Mammary epithelial cell (primary cell): ENCODE measurements at regions of chr10 and their contacts with region 1.

Region 1: DNA sequence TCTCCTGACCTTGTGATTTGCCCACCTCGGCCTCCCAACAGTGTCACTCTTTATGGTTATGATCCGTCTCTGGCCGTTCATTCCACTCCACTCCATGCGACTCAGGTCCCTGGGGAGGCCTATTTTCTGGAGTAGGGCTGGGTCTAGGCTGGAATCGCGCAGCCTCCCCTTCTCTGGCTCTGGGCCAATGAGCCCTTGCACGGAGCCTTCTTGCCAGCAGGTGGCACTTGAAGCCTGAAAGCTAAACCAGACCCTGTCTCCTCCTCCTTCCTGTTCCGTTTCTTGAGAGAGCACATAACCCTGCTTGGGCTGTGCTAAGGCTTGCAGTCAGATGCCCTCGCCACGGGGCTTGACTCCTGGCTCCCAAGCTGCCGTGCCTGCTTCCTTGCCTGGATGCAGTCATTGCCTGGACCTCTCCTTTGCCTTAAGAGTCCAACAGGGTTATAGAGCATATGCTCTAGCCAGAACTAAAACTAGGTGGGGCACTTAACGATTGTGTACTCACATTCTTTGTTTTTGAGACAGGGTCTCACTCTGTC is 9.6 kb upstream of the DNAJB12 start:
- DNase-seq: peak; percentile 92
- H3K4me3 ChIP-seq: no peak overlapping the region
- H3K27ac ChIP-seq: peak overlapping the region; percentile 67
- H3K4me1 ChIP-seq: peaks cover 15% of the 10 kb centered on the region
- H3K27me3 ChIP-seq: no peaks in the 10 kb centered on the region
- CTCF ChIP-seq: peak; percentile 97 to 98

Region 2: DNA sequence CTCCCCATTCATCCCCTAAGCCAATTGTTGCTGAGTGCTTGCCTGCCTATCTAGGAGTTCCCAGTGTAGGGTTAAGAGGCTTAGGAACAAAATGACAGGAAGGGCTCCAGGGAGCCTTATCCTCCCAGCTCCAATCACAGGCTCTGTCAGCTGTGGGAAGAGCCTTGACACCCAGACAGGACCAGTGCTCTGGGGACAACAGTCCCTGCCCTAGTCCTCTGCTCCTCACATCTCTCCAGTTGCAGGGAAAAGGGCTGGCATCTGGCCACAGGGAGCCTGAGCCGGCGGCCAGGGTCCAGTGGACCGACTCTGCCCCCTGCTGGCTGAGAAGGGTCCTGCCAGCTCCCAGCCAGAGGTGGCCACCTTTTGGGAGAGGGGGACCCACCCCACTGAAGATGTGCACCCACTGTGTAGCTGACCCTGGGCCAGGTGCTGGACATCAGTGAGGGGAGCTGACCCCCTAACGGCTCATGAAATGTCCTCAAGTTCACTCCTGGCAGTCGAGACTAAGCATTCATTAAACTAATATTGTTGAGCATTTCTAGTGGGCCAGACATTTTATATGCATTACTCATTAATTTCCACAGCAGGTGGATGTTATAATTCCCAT is 27.2 kb before region 1 on chr10:
- CTCF ChIA-PET with region 1: interaction called, 20 read pairs
- dilution Hi-C with region 1: no loop called
- in situ Hi-C with region 1: no loop called
- intact Hi-C with region 1: no loop called
- DNase-seq: peak; percentile 69
- H3K4me3 ChIP-seq: no peak overlapping the region
- H3K27ac ChIP-seq: peak overlapping the region; percentile 88
- H3K4me1 ChIP-seq: peaks cover 59% of the 10 kb centered on the region
- H3K27me3 ChIP-seq: no peaks in the 10 kb centered on the region
- CTCF ChIP-seq: peak; percentile 88 to 99

Region 3: GRCh38 chr10:72353965-72354477 is 10.3 kb before region 1 on chr10:
- CTCF ChIA-PET with region 1: no interaction called
- dilution Hi-C with region 1: no loop called
- in situ Hi-C with region 1: no loop called
- intact Hi-C with region 1: no loop called
- DNase-seq: no peak
- H3K4me3 ChIP-seq: peak overlapping the region; percentile 64 to 72 (median 70)
- H3K27ac ChIP-seq: peak overlapping the region; percentile 87
- H3K4me1 ChIP-seq: peaks cover 15% of the 10 kb centered on the region
- H3K27me3 ChIP-seq: no peaks in the 10 kb centered on the region
- CTCF ChIP-seq: no peak

Region 4: DNA sequence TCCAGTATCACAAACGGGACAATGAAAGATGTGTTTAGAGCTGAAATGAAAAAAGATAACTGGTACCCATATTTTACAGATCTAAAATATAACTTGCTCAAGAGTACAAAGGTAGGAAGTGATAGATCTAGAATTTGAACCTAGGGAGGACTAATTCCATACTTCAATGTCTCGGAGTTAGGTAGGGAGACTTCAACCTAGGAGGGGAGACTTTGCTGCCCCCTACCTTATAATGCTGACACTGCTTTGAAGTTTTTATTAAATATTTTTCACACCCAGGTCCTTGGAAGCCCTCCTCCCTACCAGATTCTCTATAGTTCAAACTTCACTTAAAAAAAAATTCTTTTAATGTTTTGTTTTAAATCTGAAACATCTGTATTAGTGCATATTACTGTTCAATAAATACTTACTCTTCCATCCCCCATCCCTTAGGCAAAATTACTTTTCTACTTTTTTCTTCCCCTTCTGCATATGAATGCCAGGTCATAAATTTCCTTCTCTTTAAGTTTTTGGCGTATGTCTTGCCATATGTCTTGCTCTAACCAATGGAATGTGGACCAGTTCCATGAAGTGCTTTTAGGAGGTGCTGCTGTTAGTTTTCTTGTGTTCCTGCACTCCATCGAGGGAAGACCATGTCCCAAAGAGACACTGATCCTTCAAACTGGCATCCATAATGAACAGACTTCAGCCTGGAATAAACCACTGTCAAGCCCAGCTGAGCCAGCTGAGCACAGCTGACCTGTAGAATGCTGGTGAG is 203.8 kb after region 1 on chr10:
- CTCF ChIA-PET with region 1: no interaction called
- dilution Hi-C with region 1: no loop called
- in situ Hi-C with region 1: no loop called
- intact Hi-C with region 1: loop called (anchors 2 kb)
- DNase-seq: no peak
- H3K4me3 ChIP-seq: no peak overlapping the region
- H3K27ac ChIP-seq: no peak overlapping the region
- H3K4me1 ChIP-seq: no peaks in the 10 kb centered on the region
- H3K27me3 ChIP-seq: no peaks in the 10 kb centered on the region
- CTCF ChIP-seq: peak; percentile 39 to 44

Region 5: DNA sequence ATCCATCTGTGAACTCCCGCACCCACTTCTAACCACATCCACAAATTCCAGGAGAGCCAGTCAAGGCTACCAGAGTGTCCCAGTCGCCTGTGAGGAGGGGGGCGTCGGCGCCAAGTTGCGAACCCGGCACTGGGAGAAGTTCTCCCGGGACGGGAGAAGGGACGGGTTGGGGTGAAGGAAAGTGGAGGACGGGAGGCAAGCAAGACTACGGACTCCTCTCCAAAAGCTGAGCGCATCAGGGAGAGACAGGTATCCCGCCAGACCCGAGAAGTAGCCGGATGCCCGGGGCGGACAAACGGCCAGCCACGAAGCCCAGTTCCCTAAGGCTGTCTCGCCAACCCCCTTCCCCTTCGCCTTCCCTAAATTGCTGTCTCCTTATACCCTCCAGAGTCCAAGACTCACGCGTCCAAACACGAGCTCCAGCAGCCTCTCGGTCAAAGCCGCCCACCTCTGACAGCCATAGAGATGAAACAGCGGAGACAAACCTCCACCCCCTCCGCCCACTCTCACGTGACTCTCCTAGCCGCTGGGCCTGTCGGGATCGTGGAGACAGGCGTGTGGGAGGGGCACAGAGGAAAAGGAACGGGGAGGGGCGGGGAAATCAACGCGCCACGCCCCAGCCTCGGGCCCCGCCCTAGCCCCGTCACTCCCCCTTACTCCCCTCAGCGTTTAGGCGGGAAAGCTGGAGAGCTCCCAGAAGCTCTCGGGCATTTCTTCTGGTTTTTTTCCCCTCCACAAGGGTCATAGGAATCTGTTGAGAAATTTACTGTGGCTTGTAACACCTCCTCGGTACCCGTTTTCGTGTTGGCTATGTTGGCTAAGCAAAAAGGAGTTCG is 261.5 kb after region 1 on chr10 and contains the start of gene MICU1:
- CTCF ChIA-PET with region 1: no interaction called
- dilution Hi-C with region 1: no loop called
- in situ Hi-C with region 1: no loop called
- intact Hi-C with region 1: loop called (anchors 5 kb)
- DNase-seq: peak; percentile 94
- H3K4me3 ChIP-seq: peak within 1 kb of the TSS; percentile 75 to 95 (median 92)
- H3K27ac ChIP-seq: peak within 1 kb of the TSS; percentile 88
- H3K4me1 ChIP-seq: peaks cover 4% of the 10 kb centered on the region
- H3K27me3 ChIP-seq: no peaks in the 10 kb centered on the region
- CTCF ChIP-seq: no peak
- total RNA-seq, gene MICU1: 32.1 to 38.3 TPM

Region 6: GRCh38 chr10:72834183-72834825 is 470.0 kb after region 1 on chr10:
- CTCF ChIA-PET with region 1: interaction called, 3 read pairs
- dilution Hi-C with region 1: no loop called
- in situ Hi-C with region 1: loop called (anchors 5 to 10 kb)
- intact Hi-C with region 1: loop called (anchors 1 kb)
- DNase-seq: peak; percentile 41
- H3K4me3 ChIP-seq: no peak overlapping the region
- H3K27ac ChIP-seq: no peak overlapping the region
- H3K4me1 ChIP-seq: no peaks in the 10 kb centered on the region
- H3K27me3 ChIP-seq: no peaks in the 10 kb centered on the region
- CTCF ChIP-seq: peak; percentile 51 to 67

Region 7: GRCh38 chr10:72875250-72876055 is 511.1 kb after region 1 on chr10:
- CTCF ChIA-PET with region 1: no interaction called
- dilution Hi-C with region 1: no loop called
- in situ Hi-C with region 1: no loop called
- intact Hi-C with region 1: loop called (anchors 1 kb)
- DNase-seq: peak; percentile 33
- H3K4me3 ChIP-seq: no peak overlapping the region
- H3K27ac ChIP-seq: no peak overlapping the region
- H3K4me1 ChIP-seq: no peaks in the 10 kb centered on the region
- H3K27me3 ChIP-seq: no peaks in the 10 kb centered on the region
- CTCF ChIP-seq: peak; percentile 42 to 54

Region 8: DNA sequence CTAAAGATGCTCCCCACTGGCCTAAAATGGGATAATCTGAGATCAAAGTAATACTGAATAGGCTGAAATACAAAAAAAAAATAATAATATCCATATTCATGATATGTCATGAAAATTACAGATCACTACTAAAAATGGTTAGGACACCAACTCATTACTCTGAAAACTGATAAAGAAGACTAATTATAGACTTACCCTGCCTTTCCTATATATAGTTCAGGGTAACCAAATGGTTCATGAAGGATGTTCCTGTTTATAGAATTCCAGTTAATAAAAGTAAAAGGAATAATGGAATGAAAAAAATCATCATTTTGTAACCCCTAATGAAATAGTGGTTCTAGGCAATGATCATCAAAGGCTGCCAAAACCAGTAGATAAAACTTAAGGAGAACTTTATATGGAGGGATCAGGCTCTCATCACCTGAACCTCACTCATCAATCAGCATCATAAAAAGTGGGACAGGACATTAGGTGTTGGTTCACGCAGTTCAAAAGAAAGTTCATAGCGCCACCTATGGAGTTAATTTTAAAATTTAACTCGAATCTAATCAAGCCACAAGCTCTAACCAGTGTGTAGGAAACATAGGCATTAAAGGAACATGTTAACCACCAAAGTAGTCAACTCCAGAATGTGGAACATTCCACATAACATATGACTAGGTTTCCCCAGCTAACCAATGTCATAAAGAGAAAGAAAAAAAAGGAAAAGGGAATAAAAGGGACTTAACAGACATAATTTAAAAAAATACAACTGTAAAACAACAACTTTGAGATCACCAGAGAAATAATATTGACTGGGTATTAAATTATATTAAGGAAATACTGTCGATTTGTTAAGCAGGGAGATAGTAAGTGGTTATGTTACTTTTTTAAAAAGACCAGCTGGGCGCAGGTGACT is 696.7 kb after region 1 on chr10:
- CTCF ChIA-PET with region 1: no interaction called
- dilution Hi-C with region 1: no loop called
- in situ Hi-C with region 1: loop called in 1 of 2 experiments (anchors 10 kb)
- intact Hi-C with region 1: loop called (anchors 1 kb)
- DNase-seq: peak; percentile 37
- H3K4me3 ChIP-seq: no peak overlapping the region
- H3K27ac ChIP-seq: no peak overlapping the region
- H3K4me1 ChIP-seq: no peaks in the 10 kb centered on the region
- H3K27me3 ChIP-seq: no peaks in the 10 kb centered on the region
- CTCF ChIP-seq: peak; percentile 34 to 58